Activated CD4-positive, alpha-beta memory T cell treated with anti-CD3 and anti-CD28 coated beads for 36 hours (primary cell): ENCODE measurements at regions of chr4 and their contacts with region 1.

Region 1: DNA sequence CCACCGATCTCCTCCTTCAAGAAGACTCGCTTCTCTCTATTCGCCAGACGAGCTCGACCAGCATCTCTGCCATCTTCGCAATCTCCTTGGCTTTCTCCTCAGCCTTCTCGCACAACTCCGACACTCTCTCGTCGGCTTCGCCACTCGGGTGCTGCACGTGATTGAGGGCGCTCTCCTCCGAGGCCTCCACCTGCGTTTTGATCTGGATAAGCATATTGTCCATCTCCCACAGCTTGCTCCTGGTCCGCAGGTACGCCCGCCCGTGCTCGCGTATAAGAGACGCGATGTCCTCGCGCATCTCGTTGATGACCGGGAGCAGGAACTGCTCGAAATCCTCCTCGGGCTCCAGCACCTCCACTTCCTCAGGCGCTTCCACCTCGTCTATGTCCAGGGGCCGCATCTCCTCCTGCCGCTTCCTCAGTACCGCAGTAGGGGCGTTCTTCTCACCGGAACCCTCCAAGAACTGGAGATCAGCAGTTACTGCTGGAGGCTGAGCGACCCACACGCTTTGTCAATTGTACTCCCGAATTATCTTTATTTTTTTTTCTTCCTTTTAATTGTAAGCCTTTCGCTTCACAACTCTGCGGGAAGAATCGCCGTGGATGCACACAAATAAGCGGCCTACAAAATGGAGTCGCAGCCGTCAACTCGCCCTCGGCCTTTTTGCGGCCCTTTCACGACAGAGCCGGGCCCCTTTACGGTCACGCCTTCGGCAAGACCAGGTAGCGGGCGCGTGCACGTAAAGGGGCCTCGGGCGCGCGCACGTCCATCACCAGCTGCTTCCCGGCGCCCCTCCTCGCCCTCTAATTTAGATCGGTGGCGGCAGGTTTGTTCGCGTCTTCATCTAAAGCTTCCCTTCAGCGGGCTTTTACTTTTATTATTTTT is at the start of gene MRFAP1L1:
- DNase-seq: peak; percentile 98
- H3K4me3 Mint-ChIP-seq: peak within 1 kb of the TSS; percentile 99
- H3K27ac Mint-ChIP-seq: peak within 1 kb of the TSS; percentile 95
- H3K4me1 Mint-ChIP-seq: peaks cover 49% of the 10 kb centered on the region
- H3K27me3 Mint-ChIP-seq: no peaks in the 10 kb centered on the region
- total RNA-seq, gene MRFAP1L1: 50.7 to 52.0 TPM

Region 2: GRCh38 chr4:6695660-6696630 is 13.5 kb before region 1 on chr4:
- CTCF ChIA-PET with region 1: interaction called, 22 read pairs
- POLR2A ChIA-PET with region 1: interaction called, 13 read pairs
- intact Hi-C with region 1: loop called (anchors 1 kb)
- DNase-seq: peak; percentile 76
- H3K4me3 Mint-ChIP-seq: peak overlapping the region; percentile 69
- H3K27ac Mint-ChIP-seq: peak overlapping the region; percentile 98
- H3K4me1 Mint-ChIP-seq: peaks cover 79% of the 10 kb centered on the region
- H3K27me3 Mint-ChIP-seq: no peaks in the 10 kb centered on the region